Heart right ventricle (tissue), 16 donors: ENCODE measurements at regions of chr9 and their contacts with region 1.

Region 1: DNA sequence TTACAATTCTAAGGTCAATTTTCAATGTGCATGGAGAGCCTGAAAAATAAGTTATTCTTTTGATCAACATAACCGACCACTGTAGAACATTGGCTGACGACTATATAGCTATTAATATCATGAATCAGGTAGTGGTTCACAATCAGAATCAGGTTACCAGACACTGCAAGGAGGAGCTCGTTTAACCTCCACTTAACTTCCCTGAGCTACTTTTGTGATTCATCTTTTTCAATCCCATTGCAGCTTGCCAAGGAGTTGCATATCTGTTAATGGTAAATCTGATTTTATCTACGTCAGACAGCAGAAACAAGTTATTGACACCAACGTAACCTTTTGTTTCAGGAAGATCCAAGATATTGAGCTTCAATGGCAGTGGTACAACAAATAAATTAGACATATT is 2263.8 kb upstream of the ACO1 start:
- DNase-seq: no peak
- ATAC-seq: no peak
- H3K4me3 ChIP-seq: no peak overlapping the region
- H3K27ac ChIP-seq: no peak overlapping the region
- H3K4me1 ChIP-seq: no peaks in the 10 kb centered on the region
- H3K27me3 ChIP-seq: no peaks in the 10 kb centered on the region
- CTCF ChIP-seq: no peak

Region 2: GRCh38 chr9:29966247-29966646 is 154.4 kb before region 1 on chr9:
- intact Hi-C with region 1: no loop called
- DNase-seq: no peak
- ATAC-seq: no peak
- H3K4me3 ChIP-seq: no peak overlapping the region
- H3K27ac ChIP-seq: no peak overlapping the region
- H3K4me1 ChIP-seq: no peaks in the 10 kb centered on the region
- H3K27me3 ChIP-seq: no peaks in the 10 kb centered on the region
- CTCF ChIP-seq: no peak

Region 3: DNA sequence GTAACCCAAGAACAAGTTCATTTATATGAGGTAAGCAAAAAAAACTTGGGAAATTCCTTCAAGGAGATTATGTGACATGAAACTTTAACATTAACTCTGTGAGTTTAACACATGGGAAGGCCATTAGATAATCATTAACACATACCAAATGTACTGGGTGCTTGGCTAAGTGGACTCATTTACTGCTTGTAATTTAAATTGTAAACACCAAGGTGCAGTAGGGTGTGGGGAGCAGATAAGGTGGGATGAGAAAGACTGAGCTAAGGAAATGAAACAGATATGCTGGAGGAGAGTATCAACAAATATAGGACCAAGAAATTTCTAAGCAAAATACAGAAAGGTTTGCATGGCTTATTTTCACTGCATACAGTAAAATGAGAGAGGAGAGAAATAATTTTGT is 121.0 kb before region 1 on chr9:
- intact Hi-C with region 1: no loop called
- DNase-seq: no peak
- ATAC-seq: no peak
- H3K4me3 ChIP-seq: no peak overlapping the region
- H3K27ac ChIP-seq: no peak overlapping the region
- H3K4me1 ChIP-seq: no peaks in the 10 kb centered on the region
- H3K27me3 ChIP-seq: no peaks in the 10 kb centered on the region
- CTCF ChIP-seq: no peak

Region 4: GRCh38 chr9:30172206-30172605 is 51.6 kb after region 1 on chr9:
- intact Hi-C with region 1: loop called in 1 of 10 experiments (anchors 2 kb)
- DNase-seq: no peak
- ATAC-seq: no peak
- H3K4me3 ChIP-seq: no peak overlapping the region
- H3K27ac ChIP-seq: no peak overlapping the region
- H3K4me1 ChIP-seq: no peaks in the 10 kb centered on the region
- H3K27me3 ChIP-seq: no peaks in the 10 kb centered on the region
- CTCF ChIP-seq: no peak